Activated CD8-positive, alpha-beta T cell treated with anti-CD3 and anti-CD28 coated beads for 36 hours (primary cell): ENCODE measurements at regions of chr15 and their contacts with region 1.

Region 1: DNA sequence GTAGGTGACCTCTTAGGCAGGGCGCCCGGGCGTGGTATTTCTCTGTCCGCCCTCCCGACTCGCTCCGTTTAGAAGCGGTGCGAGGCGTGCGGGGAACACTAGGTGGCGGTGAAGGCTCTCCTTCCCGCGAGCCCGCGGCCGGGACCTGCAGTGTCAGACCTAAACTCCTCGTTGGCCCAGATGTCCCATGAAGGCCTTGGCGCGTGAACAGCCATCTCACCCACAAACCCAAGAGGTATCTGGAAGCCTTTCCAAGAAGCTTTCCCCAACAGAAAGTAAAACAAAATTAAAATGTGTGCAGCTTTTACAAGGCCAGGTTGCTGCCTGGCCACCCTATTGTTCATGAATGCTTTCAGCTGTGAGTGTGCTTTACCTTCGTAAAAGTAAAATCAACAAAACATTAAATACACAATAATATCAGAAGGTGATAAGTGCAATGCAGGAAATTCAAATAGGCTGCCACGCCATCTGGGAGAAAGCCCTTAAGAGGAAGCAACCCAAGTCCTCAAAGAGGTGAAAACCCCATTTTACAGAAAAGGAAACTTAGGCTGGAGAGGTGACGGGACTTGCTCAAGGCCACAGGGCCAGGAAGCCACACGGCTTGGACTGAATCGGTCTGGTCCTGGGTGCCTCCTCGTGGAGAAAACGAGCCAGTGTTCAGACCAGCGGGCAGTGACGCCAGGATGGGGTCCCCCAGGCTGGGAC is 120.3 kb downstream of the ETFA start:
- DNase-seq: peak; percentile 83
- ATAC-seq: peak; percentile 94
- H3K4me3 Mint-ChIP-seq: no peak overlapping the region
- H3K27ac Mint-ChIP-seq: no peak overlapping the region
- H3K4me1 Mint-ChIP-seq: peaks cover 13% of the 10 kb centered on the region
- H3K27me3 Mint-ChIP-seq: peaks cover 33% of the 10 kb centered on the region
- CTCF ChIP-seq: peak; percentile 83

Region 2: GRCh38 chr15:75988989-75989388 is 202.0 kb before region 1 on chr15:
- CTCF ChIA-PET with region 1: no interaction called
- POLR2A ChIA-PET with region 1: no interaction called
- intact Hi-C with region 1: no loop called
- DNase-seq: no peak
- ATAC-seq: no peak
- H3K4me3 Mint-ChIP-seq: no peak overlapping the region
- H3K27ac Mint-ChIP-seq: no peak overlapping the region
- H3K4me1 Mint-ChIP-seq: no peaks in the 10 kb centered on the region
- H3K27me3 Mint-ChIP-seq: no peaks in the 10 kb centered on the region
- CTCF ChIP-seq: no peak

Region 3: GRCh38 chr15:76150971-76151598 is 39.9 kb before region 1 on chr15:
- CTCF ChIA-PET with region 1: interaction called, 11 read pairs
- POLR2A ChIA-PET with region 1: no interaction called
- intact Hi-C with region 1: no loop called
- DNase-seq: peak; percentile 93
- ATAC-seq: peak; percentile 97
- H3K4me3 Mint-ChIP-seq: no peak overlapping the region
- H3K27ac Mint-ChIP-seq: peak overlapping the region; percentile 25
- H3K4me1 Mint-ChIP-seq: peaks cover 32% of the 10 kb centered on the region
- H3K27me3 Mint-ChIP-seq: peaks cover 9% of the 10 kb centered on the region
- CTCF ChIP-seq: peak; percentile 83

Region 4: GRCh38 chr15:76206325-76206976 is 15.5 kb after region 1 on chr15:
- CTCF ChIA-PET with region 1: interaction called, 16 read pairs
- POLR2A ChIA-PET with region 1: interaction called, 6 read pairs
- intact Hi-C with region 1: no loop called
- DNase-seq: no peak
- ATAC-seq: no peak
- H3K4me3 Mint-ChIP-seq: no peak overlapping the region
- H3K27ac Mint-ChIP-seq: no peak overlapping the region
- H3K4me1 Mint-ChIP-seq: peaks cover 8% of the 10 kb centered on the region
- H3K27me3 Mint-ChIP-seq: no peaks in the 10 kb centered on the region
- CTCF ChIP-seq: no peak

Region 5: DNA sequence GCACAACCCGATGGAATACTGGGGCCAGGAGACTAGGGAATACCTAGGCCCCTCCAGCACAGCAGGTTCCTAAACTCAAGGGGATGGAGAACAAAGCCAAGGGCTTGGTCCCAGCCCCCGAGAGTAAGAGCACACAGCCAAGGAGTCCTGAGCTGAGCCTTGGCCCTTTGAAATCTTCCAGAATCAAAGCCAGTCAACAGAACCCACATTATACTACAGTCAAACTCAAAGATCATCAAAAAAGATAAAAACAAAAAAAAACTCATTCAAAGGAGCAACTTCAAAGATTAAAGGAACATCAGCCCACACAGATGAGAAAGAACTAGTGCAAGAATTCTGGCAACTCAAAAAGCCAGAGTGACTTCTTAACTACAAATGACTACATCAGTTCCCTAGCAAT is 362.6 kb after region 1 on chr15:
- CTCF ChIA-PET with region 1: no interaction called
- POLR2A ChIA-PET with region 1: no interaction called
- intact Hi-C with region 1: no loop called
- DNase-seq: no peak
- ATAC-seq: no peak
- H3K4me3 Mint-ChIP-seq: no peak overlapping the region
- H3K27ac Mint-ChIP-seq: no peak overlapping the region
- H3K4me1 Mint-ChIP-seq: peaks cover 14% of the 10 kb centered on the region
- H3K27me3 Mint-ChIP-seq: no peaks in the 10 kb centered on the region
- CTCF ChIP-seq: no peak

Region 6: DNA sequence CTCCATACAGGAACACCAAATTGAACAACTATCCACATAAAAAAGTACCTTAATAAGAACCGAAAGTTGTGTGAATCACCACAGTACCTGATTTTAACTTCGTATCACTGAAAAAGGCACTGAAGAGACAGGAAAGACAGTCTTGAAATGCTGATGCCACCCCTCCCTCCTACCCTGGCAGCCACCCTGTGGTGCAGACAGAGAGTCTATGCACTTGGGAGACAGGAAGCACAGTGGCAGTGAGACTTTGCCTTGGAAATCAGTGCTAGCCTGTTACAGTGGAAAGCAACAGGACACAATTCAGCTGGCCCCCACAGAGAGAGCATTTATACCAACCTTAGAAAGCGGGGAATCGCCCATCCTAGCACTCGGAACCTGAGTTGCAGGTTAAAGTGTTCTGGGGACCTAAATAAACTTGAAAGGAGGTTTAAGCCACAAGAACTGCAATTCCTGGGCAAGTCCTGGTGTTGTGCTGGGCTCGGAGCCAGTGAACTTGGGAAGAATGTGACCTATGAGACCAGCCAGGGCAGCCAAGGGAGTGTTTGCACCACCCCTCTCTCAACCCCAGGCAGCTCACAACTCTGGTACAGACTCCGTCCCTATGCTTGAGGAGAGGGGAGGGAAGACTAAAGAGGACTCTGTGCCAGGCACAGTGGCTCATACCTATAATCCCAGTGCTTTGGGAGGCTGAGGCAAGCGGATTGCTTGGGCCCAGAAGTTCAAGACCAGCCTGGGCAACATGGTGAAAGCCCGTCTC is 385.7 kb after region 1 on chr15:
- CTCF ChIA-PET with region 1: no interaction called
- POLR2A ChIA-PET with region 1: no interaction called
- intact Hi-C with region 1: no loop called
- DNase-seq: no peak
- ATAC-seq: no peak
- H3K4me3 Mint-ChIP-seq: no peak overlapping the region
- H3K27ac Mint-ChIP-seq: no peak overlapping the region
- H3K4me1 Mint-ChIP-seq: peaks cover 27% of the 10 kb centered on the region
- H3K27me3 Mint-ChIP-seq: no peaks in the 10 kb centered on the region
- CTCF ChIP-seq: no peak

Region 7: GRCh38 chr15:76752549-76752948 is 561.6 kb after region 1 on chr15:
- CTCF ChIA-PET with region 1: no interaction called
- POLR2A ChIA-PET with region 1: no interaction called
- intact Hi-C with region 1: no loop called
- DNase-seq: peak; percentile 35
- ATAC-seq: peak; percentile 81
- H3K4me3 Mint-ChIP-seq: no peak overlapping the region
- H3K27ac Mint-ChIP-seq: no peak overlapping the region
- H3K4me1 Mint-ChIP-seq: peaks cover 14% of the 10 kb centered on the region
- H3K27me3 Mint-ChIP-seq: no peaks in the 10 kb centered on the region
- CTCF ChIP-seq: no peak